ENCODE measurements at regions of chr1 and their contacts with region 1.

Region 1: DNA sequence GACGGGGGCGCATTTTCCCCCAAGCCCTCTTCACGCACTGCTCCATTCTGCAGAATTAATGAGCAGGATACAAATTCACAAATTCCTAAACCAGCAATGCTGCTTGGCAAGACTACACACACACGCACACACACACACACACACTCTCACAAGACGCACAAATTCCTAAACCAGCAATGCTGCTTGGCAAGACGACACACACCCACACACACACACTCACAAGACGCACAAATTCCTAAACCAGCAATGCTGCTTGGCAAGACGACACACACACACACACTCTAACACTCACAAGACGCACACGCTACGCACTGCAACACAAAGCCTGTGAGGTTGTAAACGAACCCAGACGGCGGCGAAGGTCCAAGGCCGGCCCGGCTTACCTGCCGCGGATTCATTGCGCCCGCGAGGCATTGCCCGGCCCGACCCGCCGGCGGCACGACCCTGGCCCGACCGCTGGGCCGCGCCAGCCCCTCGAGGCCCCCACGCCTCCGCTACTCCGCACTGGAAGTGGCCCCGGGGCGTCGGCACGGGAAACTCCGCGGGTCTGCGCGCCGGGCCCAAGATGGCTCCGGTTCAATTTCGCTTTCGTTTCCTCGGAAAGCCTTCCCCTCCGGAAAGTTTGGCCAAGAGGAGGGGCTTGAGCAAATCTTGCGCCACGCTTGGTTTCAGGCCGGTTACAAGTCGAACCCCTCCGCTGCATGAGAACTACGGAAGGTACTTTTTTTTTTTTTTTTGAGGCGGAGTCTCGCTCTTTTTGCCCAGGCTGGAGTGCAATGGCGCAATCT is at the start of gene ADAR:
- DNase-seq: peak; percentile 96
- ATAC-seq: peak; percentile 82
- H3K4me3 Mint-ChIP-seq: peak within 1 kb of the TSS; percentile 85
- H3K27ac Mint-ChIP-seq: peak within 1 kb of the TSS; percentile 97
- H3K4me1 Mint-ChIP-seq: peaks cover 66% of the 10 kb centered on the region
- H3K27me3 Mint-ChIP-seq: no peaks in the 10 kb centered on the region
- total RNA-seq, gene ADAR: 314 to 317 TPM

Region 2: DNA sequence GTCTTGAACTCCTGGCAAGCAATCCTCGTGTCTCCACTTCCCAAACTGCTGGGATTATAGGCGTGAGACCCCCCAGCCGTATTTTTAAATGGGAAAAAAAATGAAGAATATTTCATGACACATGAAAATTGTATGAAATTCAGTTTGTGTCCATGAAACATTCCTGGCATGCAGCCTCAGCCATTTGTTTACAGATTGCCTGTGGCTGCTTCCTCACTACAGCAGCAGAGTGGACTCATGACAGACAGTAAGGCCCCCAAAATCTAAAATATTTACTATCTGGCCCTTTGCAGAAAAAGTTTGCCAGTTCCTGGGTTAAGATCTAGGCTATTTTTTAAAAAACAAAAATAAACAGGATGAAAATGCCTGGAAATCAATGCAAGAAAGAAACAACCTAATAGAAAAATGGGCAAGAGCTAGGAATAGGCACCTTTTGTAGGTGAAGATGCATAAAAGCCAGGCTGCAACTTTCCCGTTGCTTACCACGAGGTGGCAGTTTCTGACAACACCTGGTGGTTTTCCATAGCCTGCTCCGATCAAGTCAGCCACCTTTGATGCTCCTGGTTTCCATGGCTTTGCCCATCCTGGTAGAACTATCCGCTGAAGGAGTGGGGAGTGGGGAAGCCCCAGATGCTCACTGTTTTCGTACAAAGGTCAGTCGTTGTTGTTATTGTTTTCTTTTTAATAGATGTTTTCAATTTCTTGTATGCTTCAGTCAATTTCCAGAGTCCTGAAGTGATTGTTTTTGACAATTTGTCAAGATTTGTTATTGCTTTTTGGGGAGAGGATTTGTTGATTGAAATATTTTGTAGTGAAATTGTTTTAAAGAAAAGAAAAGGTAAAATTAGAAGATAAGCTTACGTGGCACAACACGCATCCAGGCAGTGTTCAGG is 73.6 kb before region 1 on chr1:
- CTCF ChIA-PET with region 1: no interaction called
- POLR2A ChIA-PET with region 1: no interaction called
- DNase-seq: no peak
- ATAC-seq: no peak
- H3K4me3 Mint-ChIP-seq: no peak overlapping the region
- H3K27ac Mint-ChIP-seq: no peak overlapping the region
- H3K4me1 Mint-ChIP-seq: no peaks in the 10 kb centered on the region
- H3K27me3 Mint-ChIP-seq: peaks cover 12% of the 10 kb centered on the region

Region 3: DNA sequence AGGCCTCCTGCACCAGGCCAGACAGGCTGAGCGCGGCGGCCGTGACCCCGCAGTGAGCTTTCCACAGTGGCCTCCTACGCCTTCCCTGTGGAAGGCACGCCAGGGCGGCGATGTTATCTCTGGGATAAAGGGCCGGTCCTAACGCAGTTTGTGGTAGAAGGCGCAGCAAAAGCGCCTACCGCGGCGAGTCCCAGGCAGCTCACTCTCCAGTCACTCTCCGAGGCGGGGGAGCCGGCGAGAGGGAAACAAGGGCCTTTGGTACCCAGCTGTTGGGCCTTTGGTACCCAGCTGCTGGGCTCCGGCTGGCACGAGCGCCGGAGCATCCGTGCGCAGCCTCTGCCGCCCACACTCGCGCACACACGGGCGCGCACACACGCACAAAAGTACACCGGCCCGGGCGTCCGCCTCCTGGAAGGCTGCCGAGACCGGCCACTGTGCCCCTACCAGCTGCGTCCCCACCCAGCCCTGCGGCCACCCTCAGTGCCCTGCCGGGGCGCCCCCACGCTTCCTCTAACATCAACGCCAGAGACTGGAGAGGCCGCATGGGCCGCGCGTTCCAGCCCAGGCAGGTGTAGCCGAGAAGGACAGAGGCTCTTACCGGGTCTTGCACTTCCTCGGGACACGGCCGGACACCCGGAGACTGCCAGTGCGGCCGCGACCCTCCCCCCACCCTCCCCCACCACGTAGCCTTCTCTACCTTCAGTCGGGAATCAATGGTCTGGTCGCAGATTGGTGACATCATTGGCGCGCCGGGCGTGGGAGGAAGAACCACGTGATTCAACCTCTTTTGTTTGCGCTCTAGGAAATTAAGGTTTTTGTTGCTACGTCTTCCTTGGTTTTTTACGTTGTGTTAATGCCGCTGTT is 19.7 kb after region 1 on chr1:
- CTCF ChIA-PET with region 1: interaction called, 9 read pairs
- POLR2A ChIA-PET with region 1: interaction called, 31 read pairs
- DNase-seq: peak; percentile 93
- ATAC-seq: peak; percentile 76
- H3K4me3 Mint-ChIP-seq: peak overlapping the region; percentile 97
- H3K27ac Mint-ChIP-seq: peak overlapping the region; percentile 97
- H3K4me1 Mint-ChIP-seq: peaks cover 31% of the 10 kb centered on the region
- H3K27me3 Mint-ChIP-seq: peaks cover 10% of the 10 kb centered on the region